Thyroid gland (tissue), 4 donors: ENCODE measurements at regions of chr9 and their contacts with region 1.

Region 1: DNA sequence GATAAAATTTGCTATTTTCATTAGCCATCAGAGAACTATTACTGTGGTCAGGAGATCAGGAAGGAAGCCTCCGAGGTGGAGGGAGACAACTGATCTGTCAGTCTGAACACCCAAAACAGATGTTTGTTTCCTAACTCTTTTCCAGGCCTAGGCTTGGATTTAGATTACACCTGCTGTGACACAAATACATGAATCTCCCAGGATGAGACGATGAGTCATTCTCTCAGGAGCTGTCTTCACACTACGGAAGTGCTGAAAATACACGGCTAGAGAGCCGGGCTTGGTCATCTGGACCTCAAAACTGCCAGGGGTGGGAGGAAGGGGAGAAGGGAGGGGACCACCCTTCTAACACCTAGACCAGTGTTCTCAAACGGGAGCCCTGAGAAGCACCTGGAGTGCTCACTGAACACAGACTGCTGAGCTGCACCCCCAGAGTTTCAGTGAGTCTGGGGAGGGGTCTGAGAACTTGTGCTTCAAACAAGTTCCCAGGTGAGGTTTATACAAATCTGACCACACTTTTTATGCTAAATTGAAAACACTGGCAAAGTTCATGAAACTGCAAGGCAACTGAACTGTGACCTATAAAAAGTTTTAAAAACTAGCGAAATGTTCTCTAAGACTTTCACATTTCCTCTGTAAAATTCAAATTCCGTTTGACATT is 80.3 kb upstream of the EQTN start:
- DNase-seq: no peak
- H3K4me3 ChIP-seq: no peak overlapping the region
- H3K27ac ChIP-seq: no peak overlapping the region
- H3K4me1 ChIP-seq: peaks cover 6 to 12% of the 10 kb centered on the region in 2 donors
- H3K27me3 ChIP-seq: no peaks in the 10 kb centered on the region
- CTCF ChIP-seq: no peak
- POLR2A ChIP-seq: no peak

Region 2: DNA sequence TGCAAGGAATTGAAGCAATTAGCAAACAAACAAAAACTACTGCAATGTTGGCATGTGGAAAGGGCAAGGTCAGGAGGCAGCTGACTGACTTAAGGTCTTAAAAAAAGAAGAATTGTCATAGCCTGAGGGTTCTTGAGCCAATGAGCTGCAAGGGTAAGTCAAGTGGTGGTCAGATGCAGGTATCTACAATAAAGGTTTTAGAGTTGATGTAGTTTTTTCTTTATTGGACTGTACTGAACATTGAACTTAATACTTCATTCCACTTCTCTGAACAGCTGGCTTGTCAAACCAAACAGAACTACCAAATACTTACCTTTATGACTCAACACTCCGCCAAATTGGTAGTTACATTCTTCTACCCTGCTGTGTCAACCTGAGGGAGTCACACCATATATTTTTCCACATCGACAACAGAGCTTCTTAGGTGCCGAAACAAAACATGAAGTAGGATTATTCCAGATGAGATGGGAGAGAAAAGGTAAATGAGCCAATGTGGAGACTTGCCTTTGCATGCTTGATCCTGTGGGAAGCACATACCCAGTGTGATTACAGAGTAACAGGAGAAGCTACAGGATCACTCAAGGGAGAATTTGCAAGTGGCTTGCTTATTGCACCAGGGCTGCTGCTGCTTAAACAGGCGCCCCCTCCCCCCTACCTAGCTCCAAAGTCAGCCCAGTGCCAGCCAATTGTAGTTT is 115.6 kb before region 1 on chr9:
- intact Hi-C with region 1: no loop called
- DNase-seq: peak; percentile 60 to 70
- H3K4me3 ChIP-seq: no peak overlapping the region
- H3K27ac ChIP-seq: peak overlapping the region; percentile 31 to 66 (median 63)
- H3K4me1 ChIP-seq: peaks cover 5 to 30% of the 10 kb centered on the region in 2 donors
- H3K27me3 ChIP-seq: no peaks in the 10 kb centered on the region
- CTCF ChIP-seq: no peak
- POLR2A ChIP-seq: no peak

Region 3: DNA sequence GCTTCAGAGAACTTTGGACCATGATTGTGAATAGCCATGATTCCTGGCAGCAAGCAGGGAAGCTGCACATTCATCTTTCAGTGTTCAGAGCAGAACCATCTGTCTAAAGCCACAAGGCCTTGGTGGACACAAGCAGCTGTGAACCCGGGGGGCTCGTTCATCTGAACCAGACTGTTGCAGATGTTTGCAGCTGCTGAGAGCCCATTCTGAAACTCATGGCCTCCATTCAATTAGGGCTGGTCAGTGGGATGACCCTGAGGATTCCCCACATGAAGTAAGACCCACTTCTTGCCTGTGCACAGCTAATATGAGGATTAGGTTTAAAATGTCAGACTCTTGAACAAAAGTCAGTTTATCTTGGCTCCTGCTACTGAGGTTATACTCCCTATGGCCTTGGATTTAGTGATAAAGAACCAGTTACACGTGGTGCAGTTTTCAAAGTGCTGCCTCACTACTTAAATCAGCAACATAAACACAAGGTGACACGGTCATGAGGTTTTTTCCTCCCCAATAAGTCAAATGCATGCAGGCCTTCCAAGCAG is 37.0 kb after region 1 on chr9:
- intact Hi-C with region 1: loop called (anchors 5 kb)
- DNase-seq: no peak
- H3K4me3 ChIP-seq: no peak overlapping the region
- H3K27ac ChIP-seq: peak overlapping the region in 1 of 3 donors; percentile 36
- H3K4me1 ChIP-seq: peaks cover 13 to 20% of the 10 kb centered on the region in 2 donors
- H3K27me3 ChIP-seq: no peaks in the 10 kb centered on the region
- CTCF ChIP-seq: no peak
- POLR2A ChIP-seq: no peak